B cell (primary cell): ENCODE measurements at regions of chr14 and their contacts with region 1.

Region 1: GRCh38 chr14:20343092-20343861 is at the start of gene PARP2:
- DNase-seq: peak; percentile 97
- ATAC-seq: peak; percentile 81
- H3K4me3 ChIP-seq: peak within 1 kb of the TSS; percentile 79 to 96 (median 88)
- H3K4me3 Mint-ChIP-seq: peak within 1 kb of the TSS; percentile 97
- H3K27ac ChIP-seq: peak within 1 kb of the TSS; percentile 85 to 93
- H3K27ac Mint-ChIP-seq: peak within 1 kb of the TSS; percentile 99
- H3K4me1 ChIP-seq: peaks cover 6 to 10% of the 10 kb centered on the region in 2 donors
- H3K4me1 Mint-ChIP-seq: peaks cover 15% of the 10 kb centered on the region
- H3K27me3 ChIP-seq: no peaks in the 10 kb centered on the region
- H3K27me3 Mint-ChIP-seq: no peaks in the 10 kb centered on the region
- CTCF ChIP-seq: peak; percentile 22
- total RNA-seq, gene PARP2: 17.4 and 22.4 TPM in 2 replicates

Region 2: DNA sequence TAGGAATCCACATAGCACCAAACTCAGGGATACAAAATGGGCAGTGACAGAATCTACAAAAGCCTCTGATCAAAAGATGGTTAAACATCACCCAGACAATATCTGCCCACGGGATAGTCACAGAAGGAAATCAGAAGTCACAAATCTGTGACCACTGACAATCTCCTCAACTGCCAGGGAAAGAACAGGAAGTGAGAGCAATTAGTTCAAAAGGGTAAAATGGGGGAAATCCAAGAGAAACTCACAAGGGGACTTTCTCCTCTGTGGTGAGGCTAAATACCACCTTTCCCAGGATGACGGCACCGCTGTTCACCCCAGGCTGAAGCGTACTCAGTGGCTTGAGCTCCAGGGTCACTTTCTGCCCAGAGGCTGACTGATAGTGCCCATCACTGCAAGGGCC is 48.2 kb before region 1 on chr14:
- CTCF ChIA-PET with region 1: no interaction called
- POLR2A ChIA-PET with region 1: no interaction called
- intact Hi-C with region 1: no loop called
- DNase-seq: peak; percentile 48
- ATAC-seq: peak; percentile 31
- H3K4me3 ChIP-seq: no peak overlapping the region
- H3K4me3 Mint-ChIP-seq: no peak overlapping the region
- H3K27ac ChIP-seq: peak overlapping the region in 1 of 2 donors; percentile 45
- H3K27ac Mint-ChIP-seq: peak overlapping the region; percentile 3
- H3K4me1 ChIP-seq: peaks cover 4 to 11% of the 10 kb centered on the region in 2 donors
- H3K4me1 Mint-ChIP-seq: peaks cover 16% of the 10 kb centered on the region
- H3K27me3 ChIP-seq: no peaks in the 10 kb centered on the region
- H3K27me3 Mint-ChIP-seq: no peaks in the 10 kb centered on the region
- CTCF ChIP-seq: no peak

Region 3: GRCh38 chr14:20305265-20306078 is 37.8 kb before region 1 on chr14 and contains the start of gene TTC5:
- CTCF ChIA-PET with region 1: interaction called, 4 read pairs
- POLR2A ChIA-PET with region 1: no interaction called
- intact Hi-C with region 1: loop called (anchors 1 kb)
- DNase-seq: peak; percentile 94
- ATAC-seq: peak; percentile 100
- H3K4me3 ChIP-seq: peak within 1 kb of the TSS; percentile 72 to 96 (median 95)
- H3K4me3 Mint-ChIP-seq: peak within 1 kb of the TSS; percentile 89
- H3K27ac ChIP-seq: peak within 1 kb of the TSS in 1 of 2 donors; percentile 35
- H3K27ac Mint-ChIP-seq: peak within 1 kb of the TSS; percentile 85
- H3K4me1 ChIP-seq: peaks cover 6 to 14% of the 10 kb centered on the region in 2 donors
- H3K4me1 Mint-ChIP-seq: peaks cover 24% of the 10 kb centered on the region
- H3K27me3 ChIP-seq: no peaks in the 10 kb centered on the region
- H3K27me3 Mint-ChIP-seq: no peaks in the 10 kb centered on the region
- CTCF ChIP-seq: peak; percentile 87
- total RNA-seq, gene TTC5: 37.5 and 38.8 TPM in 2 replicates

Region 4: GRCh38 chr14:20332788-20333493 is 10.3 kb before region 1 on chr14 and contains the start of gene CCNB1IP1:
- CTCF ChIA-PET with region 1: interaction called, 88 read pairs
- POLR2A ChIA-PET with region 1: interaction called, 19 read pairs
- intact Hi-C with region 1: loop called (anchors 1 kb)
- DNase-seq: peak; percentile 83
- ATAC-seq: peak; percentile 99
- H3K4me3 ChIP-seq: peak within 1 kb of the TSS; percentile 54 to 100 (median 93)
- H3K4me3 Mint-ChIP-seq: peak within 1 kb of the TSS; percentile 99
- H3K27ac ChIP-seq: peak within 1 kb of the TSS; percentile 54 to 78
- H3K27ac Mint-ChIP-seq: peak within 1 kb of the TSS; percentile 93
- H3K4me1 ChIP-seq: peaks cover 13 to 18% of the 10 kb centered on the region in 2 donors
- H3K4me1 Mint-ChIP-seq: peaks cover 35% of the 10 kb centered on the region
- H3K27me3 ChIP-seq: no peaks in the 10 kb centered on the region
- H3K27me3 Mint-ChIP-seq: no peaks in the 10 kb centered on the region
- CTCF ChIP-seq: no peak
- total RNA-seq, gene CCNB1IP1: 24.7 and 26.0 TPM in 2 replicates

Region 5: DNA sequence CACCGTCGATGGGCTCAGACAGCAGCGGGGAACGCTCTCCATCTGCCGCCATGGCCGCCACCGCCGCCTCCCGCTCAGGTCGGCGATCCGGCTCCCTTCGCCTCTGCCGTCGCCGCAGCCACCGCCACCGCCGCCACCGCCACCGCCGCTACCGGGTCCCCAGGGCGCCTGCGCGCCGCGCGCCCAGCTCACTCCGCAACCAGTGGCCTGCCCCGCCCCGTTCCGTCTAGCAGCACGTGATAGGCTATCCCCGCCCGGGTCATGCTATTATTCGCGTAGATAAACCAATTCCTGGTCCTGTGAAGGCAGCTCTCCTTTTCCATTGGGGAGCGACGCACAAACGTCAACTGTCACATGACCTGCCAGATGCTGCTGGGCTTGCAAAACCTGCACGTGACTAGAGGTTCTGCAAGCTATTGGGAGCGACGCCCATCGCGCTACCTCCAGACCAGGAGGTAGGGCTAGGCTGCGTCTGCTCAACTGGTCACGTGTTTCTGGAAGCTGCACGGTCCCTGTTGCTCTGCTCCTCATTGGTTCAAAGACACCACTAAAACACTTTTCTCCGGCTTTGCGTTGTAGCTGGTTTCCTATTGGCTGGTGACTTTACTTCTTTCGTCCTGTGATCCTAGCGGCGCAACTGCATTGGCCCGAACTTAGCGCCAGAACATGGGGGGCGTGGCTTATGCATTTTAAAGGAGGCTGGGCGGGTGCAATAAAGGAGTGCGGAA is 118.2 kb after region 1 on chr14 and contains the start of gene PIP4P1:
- CTCF ChIA-PET with region 1: interaction called, 3 read pairs
- POLR2A ChIA-PET with region 1: interaction called, 15 read pairs
- intact Hi-C with region 1: loop called (anchors 1 kb)
- DNase-seq: peak; percentile 100
- ATAC-seq: peak; percentile 84
- H3K4me3 ChIP-seq: peak within 1 kb of the TSS; percentile 75 to 90 (median 83)
- H3K4me3 Mint-ChIP-seq: peak within 1 kb of the TSS; percentile 94
- H3K27ac ChIP-seq: peak within 1 kb of the TSS; percentile 98
- H3K27ac Mint-ChIP-seq: peak within 1 kb of the TSS; percentile 98
- H3K4me1 ChIP-seq: peaks cover 33 to 59% of the 10 kb centered on the region in 2 donors
- H3K4me1 Mint-ChIP-seq: peaks cover 45% of the 10 kb centered on the region
- H3K27me3 ChIP-seq: no peaks in the 10 kb centered on the region
- H3K27me3 Mint-ChIP-seq: no peaks in the 10 kb centered on the region
- CTCF ChIP-seq: no peak
- total RNA-seq, gene PIP4P1: 97.5 and 101 TPM in 2 replicates

Region 6: DNA sequence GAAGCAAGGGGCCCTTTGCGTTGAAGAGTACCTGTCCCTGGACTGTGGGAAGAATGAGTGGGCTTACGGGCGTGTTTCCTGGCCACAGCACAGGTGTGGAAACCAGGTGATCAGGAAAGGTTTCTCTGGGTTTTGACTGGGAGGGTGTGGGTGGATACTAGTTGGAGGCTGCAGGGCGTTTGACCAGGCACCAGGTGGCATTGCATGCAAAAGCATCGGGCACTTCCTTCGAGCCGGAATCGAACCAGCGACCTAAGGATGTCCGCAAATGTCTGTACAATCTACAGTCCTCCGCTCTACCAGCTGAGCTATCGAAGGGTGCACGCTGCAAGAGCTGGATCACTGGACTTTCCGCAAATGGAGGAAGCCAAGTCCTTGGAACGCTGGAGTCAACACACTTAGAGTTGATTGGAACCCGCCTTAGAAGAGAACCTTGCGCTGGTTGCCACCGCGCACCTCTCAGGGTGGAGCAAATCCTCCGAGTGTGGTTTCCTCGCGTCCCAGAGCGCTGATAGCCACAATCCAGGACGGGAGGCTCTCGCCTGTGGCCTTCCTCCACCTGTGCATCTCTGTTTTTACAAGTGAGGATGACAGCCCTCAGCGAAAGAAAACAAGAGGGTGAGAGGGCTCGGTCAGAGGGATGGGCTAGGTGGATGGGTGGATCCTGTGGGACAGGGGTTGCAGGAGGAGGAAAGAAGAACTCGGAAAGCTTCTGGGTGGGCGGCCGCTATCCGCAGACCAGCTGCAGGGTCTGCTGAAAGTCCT is 319.9 kb after region 1 on chr14:
- CTCF ChIA-PET with region 1: no interaction called
- POLR2A ChIA-PET with region 1: no interaction called
- intact Hi-C with region 1: loop called (anchors 5 kb)
- DNase-seq: peak; percentile 90
- ATAC-seq: peak; percentile 85
- H3K4me3 ChIP-seq: peak overlapping the region; percentile 30 to 93 (median 64)
- H3K4me3 Mint-ChIP-seq: peak overlapping the region; percentile 93
- H3K27ac ChIP-seq: peak overlapping the region in 1 of 2 donors; percentile 34
- H3K27ac Mint-ChIP-seq: peak overlapping the region; percentile 62
- H3K4me1 ChIP-seq: peaks cover 39 to 55% of the 10 kb centered on the region in 2 donors
- H3K4me1 Mint-ChIP-seq: peaks cover 53% of the 10 kb centered on the region
- H3K27me3 ChIP-seq: peaks cover 0 to 7% (median 0%) of the 10 kb centered on the region in 4 experiments
- H3K27me3 Mint-ChIP-seq: no peaks in the 10 kb centered on the region
- CTCF ChIP-seq: peak; percentile 71

Region 7: DNA sequence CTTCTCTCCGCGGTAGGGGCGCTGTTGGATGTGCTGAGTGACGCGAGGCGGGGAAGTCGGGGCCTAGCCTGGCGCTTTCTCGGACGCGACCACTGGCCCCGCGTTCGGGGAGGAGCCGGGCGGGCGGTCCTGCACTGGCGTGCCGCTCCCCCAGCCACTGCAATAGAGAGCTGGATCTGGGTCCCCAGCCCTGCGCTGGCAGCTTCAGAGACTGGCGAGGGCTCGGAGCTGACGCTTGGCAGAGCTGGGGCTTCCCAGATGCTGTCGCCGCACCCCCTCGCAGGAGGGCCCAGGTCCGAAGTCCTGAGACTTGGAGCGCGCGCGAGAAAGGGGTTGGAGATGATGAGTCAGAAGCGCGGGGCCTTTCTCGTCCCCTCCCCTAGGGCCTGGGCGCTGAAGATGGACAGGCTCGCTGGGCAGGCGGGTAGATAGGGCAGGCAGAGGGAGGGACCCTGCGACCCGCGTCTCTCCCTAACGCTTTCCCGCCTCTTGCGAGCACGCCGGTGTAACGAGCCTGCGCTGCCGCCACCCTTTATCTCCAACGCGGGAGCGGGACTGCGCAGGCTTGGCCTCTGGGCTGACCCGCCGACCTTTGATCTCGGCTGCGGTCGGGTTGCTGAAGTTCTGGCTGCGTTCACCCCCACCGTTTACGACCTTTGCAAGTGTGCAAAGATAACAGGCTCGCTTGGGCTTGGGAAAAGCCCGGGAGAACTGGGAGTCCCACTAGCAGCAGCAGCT is 760.6 kb after region 1 on chr14:
- CTCF ChIA-PET with region 1: no interaction called
- POLR2A ChIA-PET with region 1: no interaction called
- intact Hi-C with region 1: loop called (anchors 5 kb)
- DNase-seq: peak; percentile 97
- ATAC-seq: peak; percentile 86
- H3K4me3 ChIP-seq: peak overlapping the region; percentile 72 to 92 (median 84)
- H3K4me3 Mint-ChIP-seq: peak overlapping the region; percentile 78
- H3K27ac ChIP-seq: peak overlapping the region; percentile 93 to 96
- H3K27ac Mint-ChIP-seq: peak overlapping the region; percentile 96
- H3K4me1 ChIP-seq: peaks cover 17 to 25% of the 10 kb centered on the region in 2 donors
- H3K4me1 Mint-ChIP-seq: peaks cover 15% of the 10 kb centered on the region
- H3K27me3 ChIP-seq: peaks cover 0 to 25% (median 15%) of the 10 kb centered on the region in 4 experiments
- H3K27me3 Mint-ChIP-seq: peaks cover 26% of the 10 kb centered on the region
- CTCF ChIP-seq: peak; percentile 76